Stomach (tissue), 19 donors: ENCODE measurements at regions of chr20 and their contacts with region 1.

Region 1: DNA sequence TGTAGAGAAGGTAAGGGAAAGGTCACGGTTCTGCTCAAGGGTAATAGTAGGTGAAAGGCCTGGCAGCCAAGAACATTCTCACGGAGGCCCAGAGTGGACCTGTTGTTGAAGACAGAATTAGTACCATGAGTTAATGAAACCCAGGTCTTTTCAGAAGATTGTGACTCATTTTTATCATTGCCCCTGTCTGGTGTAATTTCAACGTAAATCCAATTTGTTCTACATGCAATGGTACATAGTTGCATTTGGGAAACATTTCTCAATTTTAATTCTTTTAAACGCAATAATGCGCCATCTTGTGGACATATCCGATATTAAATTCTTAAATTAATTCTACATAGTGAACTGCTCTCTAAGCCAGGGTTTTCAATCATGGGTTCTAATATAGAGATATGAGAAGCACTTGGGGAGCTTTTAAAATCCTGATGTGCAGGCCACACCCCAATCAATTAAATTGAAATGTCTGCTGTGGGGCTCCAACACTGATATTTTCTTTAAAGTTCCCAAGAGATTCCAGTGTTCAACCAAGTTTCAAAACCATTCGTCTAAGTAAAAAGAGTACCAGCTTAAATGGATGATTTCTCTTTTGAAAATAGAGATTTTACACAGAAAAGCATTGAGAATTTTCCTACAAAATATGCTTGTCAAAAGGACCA is 257.4 kb downstream of the PLCB1 start:
- DNase-seq: peak in 1 of 2 donors; percentile 71
- H3K4me3 ChIP-seq: no peak overlapping the region
- H3K27ac ChIP-seq: no peak overlapping the region
- H3K4me1 ChIP-seq: peaks cover 7 to 46% (median 35%) of the 10 kb centered on the region in 4 donors
- H3K27me3 ChIP-seq: no peaks in the 10 kb centered on the region
- CTCF ChIP-seq: peak in 4 of 7 experiments; percentile 50 to 63 (median 56)
- EP300 ChIP-seq: no peak
- POLR2A ChIP-seq: no peak

Region 2: DNA sequence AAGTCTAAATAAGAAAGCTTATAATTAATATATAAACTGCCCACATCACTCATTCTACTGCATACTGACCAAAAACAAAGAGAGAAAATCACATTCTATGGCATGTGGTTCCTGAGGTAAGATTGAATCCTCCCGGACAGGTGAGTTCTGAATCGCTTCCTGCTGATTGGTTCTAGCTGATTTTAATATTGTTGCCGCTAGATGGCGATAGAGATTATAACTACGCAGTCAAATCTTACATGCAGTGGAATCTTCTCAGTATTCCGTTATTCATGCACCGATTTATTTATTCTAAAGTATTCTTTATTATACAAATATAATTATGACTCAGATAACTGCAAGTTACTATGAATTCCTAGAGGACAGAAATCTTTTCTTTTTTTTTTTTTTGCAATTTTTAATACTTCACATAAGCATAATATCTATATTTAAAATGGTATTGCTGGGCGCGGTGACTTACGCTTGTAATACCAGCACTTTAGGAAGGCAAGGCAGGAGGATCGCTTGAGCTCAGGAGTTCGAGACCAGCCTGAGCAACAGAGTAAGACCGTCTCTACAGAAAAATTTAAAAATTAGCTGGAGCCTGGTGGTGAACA is 345.7 kb before region 1 on chr20:
- intact Hi-C with region 1: loop called (anchors 10 kb)
- DNase-seq: peak in 1 of 2 donors; percentile 84
- H3K4me3 ChIP-seq: no peak overlapping the region
- H3K27ac ChIP-seq: no peak overlapping the region
- H3K4me1 ChIP-seq: peaks cover 0 to 5% (median 1%) of the 10 kb centered on the region in 4 donors
- H3K27me3 ChIP-seq: no peaks in the 10 kb centered on the region
- CTCF ChIP-seq: peak in 5 of 7 experiments; percentile 35 to 85 (median 65)
- EP300 ChIP-seq: no peak
- POLR2A ChIP-seq: no peak

Region 3: DNA sequence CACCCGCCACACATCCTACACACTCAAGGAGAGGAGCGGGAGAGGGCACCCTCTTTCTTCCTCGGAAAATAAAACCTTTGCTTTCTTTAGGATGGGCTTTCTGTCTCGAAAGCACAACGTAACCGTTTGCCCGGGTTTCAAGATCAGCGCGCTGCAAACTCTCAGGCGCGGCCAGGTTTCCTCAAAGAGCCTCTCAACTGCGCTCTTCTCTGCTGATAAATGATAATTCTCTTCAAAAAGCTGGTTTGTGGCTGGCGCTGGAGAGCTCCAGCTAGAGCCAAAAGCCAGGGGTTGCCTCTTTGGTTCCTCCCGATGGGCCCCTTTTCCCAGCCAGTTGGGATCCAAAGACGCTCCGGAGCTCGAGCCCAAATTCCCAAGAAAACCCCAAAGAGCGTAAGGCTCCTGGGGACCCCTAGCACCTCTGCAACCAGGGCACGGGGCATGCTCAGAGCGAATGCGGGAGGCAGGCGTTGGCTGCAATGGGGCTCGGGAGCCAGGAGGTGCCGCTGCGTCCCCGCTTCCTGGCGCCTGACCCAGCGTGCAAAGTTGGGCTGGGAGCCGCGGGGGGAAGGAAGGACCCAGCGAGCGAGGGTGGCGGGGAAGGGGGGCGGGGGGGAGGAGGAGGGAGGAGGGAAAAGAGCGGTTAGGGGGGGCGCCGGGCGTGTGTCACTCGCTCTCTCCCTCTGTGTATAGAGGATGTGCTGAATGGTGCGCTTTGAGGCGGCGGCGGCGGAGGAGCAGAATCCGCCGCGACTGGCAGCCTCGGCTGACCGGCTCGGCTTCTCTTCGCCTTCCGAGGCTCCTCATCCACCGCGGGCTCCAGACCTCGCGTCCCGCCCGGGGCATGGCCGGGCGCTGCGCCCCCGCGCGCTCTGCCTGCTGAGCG is 257.7 kb before region 1 on chr20 and contains the start of gene PLCB1:
- intact Hi-C with region 1: loop called (anchors 5 kb)
- DNase-seq: peak; percentile 87 to 95
- H3K4me3 ChIP-seq: peak within 1 kb of the TSS; percentile 82 to 93 (median 88)
- H3K27ac ChIP-seq: peak within 1 kb of the TSS; percentile 74 to 91 (median 85)
- H3K4me1 ChIP-seq: peaks cover 8 to 41% (median 27%) of the 10 kb centered on the region in 4 donors
- H3K27me3 ChIP-seq: no peaks in the 10 kb centered on the region
- CTCF ChIP-seq: peak in 5 of 7 experiments; percentile 74 to 92 (median 84)
- EP300 ChIP-seq: no peak
- POLR2A ChIP-seq: no peak
- total RNA-seq, gene PLCB1: 5.8 to 66.5 (median 21.6) TPM